ENCODE measurements at regions of chr11 and their contacts with region 1.

Region 1: DNA sequence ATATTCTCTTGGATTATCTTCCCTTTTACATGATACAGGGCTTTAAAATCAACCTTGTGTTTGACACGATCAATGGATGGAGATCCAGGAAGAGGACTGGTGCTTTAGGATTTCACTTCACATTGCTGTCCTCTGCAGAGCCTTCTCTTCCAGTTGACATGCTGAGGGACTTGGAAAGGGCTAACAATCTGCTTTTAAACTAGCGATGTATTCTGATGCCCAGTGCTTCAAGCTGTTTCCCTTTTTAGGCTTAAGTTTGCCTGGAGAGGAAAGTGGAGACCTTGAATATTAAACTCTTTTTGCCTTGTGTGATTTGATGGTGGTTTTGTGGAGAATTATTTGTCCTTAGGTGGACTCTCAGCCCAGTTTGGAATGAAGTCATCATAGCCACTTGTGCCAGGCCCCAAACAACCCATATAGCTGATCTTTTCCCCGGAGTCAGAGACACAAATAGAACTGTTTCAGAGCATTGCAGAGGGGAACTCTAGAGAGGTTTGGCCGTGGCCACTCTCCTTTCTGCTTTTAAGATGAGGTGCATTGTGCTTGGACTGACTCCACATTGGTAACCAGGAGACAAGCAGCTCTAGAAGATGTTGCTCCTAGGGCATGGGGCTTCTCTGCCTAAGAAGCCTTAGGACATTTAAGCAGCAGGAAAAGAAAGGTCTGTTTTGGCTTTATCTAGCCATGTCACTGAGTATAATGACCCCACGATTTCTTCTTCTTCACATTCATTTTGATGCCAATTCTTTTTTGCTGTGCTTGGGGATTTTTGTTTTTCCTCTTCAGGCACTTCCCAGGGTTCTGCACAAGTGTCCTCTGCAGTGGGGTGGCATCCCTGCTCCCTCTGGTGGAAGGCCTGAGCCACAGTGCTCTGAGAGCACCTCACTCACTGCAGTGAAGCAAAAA is 152.8 kb downstream of the NCAM1 start:
- DNase-seq: peak; percentile 49
- H3K4me3 ChIP-seq: no peak overlapping the region
- H3K27ac ChIP-seq: peak overlapping the region in 1 of 2 experiments; percentile 22; a peak in 2 of 4 replicates
- H3K4me1 ChIP-seq: peaks cover 6 to 20% of the 10 kb centered on the region in 2 experiments; a peak in 2 of 4 replicates
- H3K27me3 ChIP-seq: no peaks in the 10 kb centered on the region
- CTCF ChIP-seq: peak; percentile 81
- EP300 ChIP-seq: no peak
- RAD21 ChIP-seq: peak; percentile 92

Region 2: DNA sequence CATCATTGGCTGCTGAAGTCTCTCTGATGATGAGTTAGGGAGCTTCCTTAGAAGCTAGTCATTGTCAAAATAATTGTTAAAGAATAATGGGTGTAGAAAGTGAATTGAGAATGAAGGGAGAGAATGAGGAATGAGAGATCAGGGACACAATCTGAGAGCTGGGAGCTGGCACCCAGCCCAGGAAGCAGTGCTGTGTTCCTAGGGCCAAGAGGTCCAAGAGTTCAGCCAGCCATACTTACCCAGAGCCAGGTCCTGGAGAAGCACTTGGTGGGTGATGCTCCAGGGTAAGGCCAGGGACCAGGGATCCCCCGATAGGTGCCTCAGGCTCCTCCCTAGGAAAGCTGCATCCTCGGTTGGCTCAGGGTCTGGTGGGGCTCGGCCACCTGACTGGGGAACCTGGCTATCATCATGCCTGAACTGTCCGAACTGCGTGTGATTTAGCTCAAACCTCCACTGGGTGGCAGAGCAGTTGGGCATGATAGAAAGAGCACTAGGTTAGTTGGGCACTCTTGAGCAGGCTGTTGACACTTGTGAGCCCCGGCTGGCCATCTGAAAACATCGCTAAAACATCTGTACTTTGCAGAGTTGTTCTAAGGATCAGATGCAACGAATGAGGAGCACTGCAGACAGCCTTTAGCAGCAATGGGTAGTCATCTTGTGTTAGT is 276.8 kb before region 1 on chr11:
- CTCF ChIA-PET with region 1: interaction called, 14 read pairs
- POLR2A ChIA-PET with region 1: no interaction called
- DNase-seq: peak; percentile 33
- H3K4me3 ChIP-seq: no peak overlapping the region
- H3K27ac ChIP-seq: peak overlapping the region in 1 of 2 experiments; percentile 97; a peak in 2 of 4 replicates
- H3K4me1 ChIP-seq: peaks cover 18 to 52% of the 10 kb centered on the region in 2 experiments
- H3K27me3 ChIP-seq: no peaks in the 10 kb centered on the region
- CTCF ChIP-seq: peak; percentile 23; the same call in 1 of the 2 replicates
- EP300 ChIP-seq: no peak
- RAD21 ChIP-seq: peak; percentile 57

Region 3: DNA sequence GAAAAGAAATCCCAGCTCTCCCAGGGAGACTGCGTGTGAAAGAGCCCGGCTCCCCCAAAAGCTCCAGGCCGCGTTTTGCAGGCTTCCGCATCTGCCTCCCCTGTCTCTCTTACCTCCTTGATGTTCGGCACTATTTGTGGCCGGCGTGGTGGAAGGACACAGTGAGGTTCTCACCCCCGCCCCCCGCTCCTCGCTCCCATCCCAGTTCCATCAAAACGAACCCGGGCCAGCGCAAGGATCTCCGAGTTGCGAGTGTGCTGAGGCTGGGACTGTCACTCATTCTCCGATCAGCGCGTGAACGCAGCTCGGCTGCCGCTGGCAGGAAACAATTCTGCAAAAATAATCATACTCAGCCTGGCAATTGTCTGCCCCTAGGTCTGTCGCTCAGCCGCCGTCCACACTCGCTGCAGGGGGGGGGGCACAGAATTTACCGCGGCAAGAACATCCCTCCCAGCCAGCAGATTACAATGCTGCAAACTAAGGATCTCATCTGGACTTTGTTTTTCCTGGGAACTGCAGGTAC is 152.8 kb before region 1 on chr11 and contains the start of gene NCAM1:
- CTCF ChIA-PET with region 1: interaction called, 21 read pairs
- POLR2A ChIA-PET with region 1: no interaction called
- DNase-seq: peak; percentile 89
- H3K4me3 ChIP-seq: peak within 1 kb of the TSS; percentile 83 to 95
- H3K27ac ChIP-seq: peak within 1 kb of the TSS in 1 of 2 experiments; percentile 93; a peak in 3 of 4 replicates
- H3K4me1 ChIP-seq: peaks cover 0 to 13% of the 10 kb centered on the region in 2 experiments; a peak in 2 of 4 replicates
- H3K27me3 ChIP-seq: no peaks in the 10 kb centered on the region; the same call in 1 of the 2 replicates
- CTCF ChIP-seq: no peak
- EP300 ChIP-seq: peak; percentile 53 to 78; a peak in 3 of 4 replicates
- RAD21 ChIP-seq: peak; percentile 55
- polyA plus RNA-seq, gene NCAM1: 19.4 and 20.7 TPM in 2 replicates

Region 4: DNA sequence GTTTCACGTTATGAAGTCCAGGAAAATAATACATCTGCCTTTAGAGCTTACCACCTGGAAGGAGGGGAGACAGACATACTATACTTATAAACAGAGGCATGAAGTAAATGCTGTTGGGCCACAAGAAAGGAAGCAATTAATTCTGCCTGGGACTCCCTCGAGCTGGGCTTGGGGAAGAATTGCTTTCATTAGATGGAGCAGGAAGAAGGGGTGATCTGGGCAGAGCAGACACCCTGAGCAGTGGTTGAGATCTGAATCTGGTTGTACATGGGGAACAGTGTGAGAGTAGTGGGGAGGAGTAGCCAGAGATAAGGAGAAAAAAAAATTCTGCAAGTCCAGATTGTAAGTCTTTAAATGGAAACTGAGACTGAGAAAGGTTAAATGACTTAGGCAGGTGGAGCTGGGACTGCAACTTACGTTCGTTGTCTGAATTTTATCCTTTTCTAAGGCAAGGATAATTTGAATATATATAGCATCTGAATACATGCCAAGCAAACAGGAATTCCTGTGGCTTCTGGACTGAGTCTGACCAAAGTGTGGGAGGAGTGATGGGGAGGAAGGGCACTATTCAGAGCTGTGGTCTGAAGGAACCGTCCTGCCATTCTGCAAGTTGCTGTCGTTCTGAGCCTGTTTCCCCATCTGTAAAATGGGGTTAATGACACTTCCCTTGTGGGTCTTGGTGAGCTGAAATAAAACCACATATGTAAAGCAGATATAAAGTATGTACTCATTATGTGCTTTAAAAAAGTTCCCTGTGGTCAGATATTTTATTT is 144.9 kb before region 1 on chr11:
- CTCF ChIA-PET with region 1: interaction called, 13 read pairs
- POLR2A ChIA-PET with region 1: no interaction called
- DNase-seq: peak; percentile 25
- H3K4me3 ChIP-seq: no peak overlapping the region
- H3K27ac ChIP-seq: peak overlapping the region in 1 of 2 experiments; percentile 83; a peak in 2 of 4 replicates
- H3K4me1 ChIP-seq: peaks cover 0 to 24% of the 10 kb centered on the region in 2 experiments; a peak in 2 of 4 replicates
- H3K27me3 ChIP-seq: no peaks in the 10 kb centered on the region
- CTCF ChIP-seq: no peak
- EP300 ChIP-seq: no peak
- RAD21 ChIP-seq: no peak

Region 5: DNA sequence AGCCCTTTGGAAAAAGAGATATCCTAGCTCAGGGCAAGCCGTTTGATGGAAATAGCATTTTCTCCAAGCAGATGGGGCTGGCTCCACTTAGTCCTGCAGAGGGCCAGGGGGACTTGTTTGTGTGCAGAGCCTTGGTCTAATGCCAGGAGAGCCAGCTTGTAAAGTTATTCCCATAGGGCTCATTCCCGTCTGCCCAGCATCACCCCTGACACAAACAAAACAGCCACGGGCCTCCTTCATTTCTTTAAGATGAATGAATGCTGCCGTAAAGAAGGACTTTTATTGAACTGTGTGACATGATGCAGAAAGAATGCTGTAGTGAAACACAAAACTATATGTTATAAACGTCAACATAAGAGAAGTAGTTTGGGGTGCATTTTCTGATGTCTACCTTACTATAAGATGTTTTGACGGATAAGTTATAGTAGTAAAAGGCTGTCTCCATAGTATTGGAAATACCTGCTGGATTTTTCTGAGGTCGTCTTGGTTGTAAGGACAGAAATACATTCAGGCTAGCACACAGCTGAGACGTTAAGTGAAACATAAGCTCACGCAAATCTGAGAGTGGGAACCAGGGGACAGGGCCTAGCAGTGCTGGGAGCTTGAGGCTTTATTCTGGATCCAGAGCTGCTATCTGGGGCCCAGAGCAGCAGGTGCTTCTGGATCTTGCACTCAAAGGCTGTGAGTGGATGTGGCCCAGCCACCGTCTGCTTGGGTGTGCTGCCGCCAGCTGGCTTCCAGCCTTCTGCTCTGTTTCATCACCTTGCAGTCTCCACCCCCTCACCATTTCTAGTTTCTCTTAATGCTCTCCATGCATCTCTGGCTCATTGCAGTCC is 99.6 kb before region 1 on chr11:
- CTCF ChIA-PET with region 1: interaction called, 20 read pairs
- POLR2A ChIA-PET with region 1: no interaction called
- DNase-seq: peak; percentile 69
- H3K4me3 ChIP-seq: no peak overlapping the region
- H3K27ac ChIP-seq: peak overlapping the region in 1 of 2 experiments; percentile 93; a peak in 2 of 4 replicates
- H3K4me1 ChIP-seq: peaks cover 10 to 23% of the 10 kb centered on the region in 2 experiments; a peak in 3 of 4 replicates
- H3K27me3 ChIP-seq: no peaks in the 10 kb centered on the region
- CTCF ChIP-seq: no peak
- EP300 ChIP-seq: peak in 1 of 2 experiments; percentile 37; a peak in 1 of 4 replicates
- RAD21 ChIP-seq: peak; percentile 49

Region 6: GRCh38 chr11:113137713-113138529 is 23.9 kb after region 1 on chr11:
- CTCF ChIA-PET with region 1: interaction called, 10 read pairs
- POLR2A ChIA-PET with region 1: no interaction called
- DNase-seq: peak; percentile 56
- H3K4me3 ChIP-seq: no peak overlapping the region
- H3K27ac ChIP-seq: peak overlapping the region in 1 of 2 experiments; percentile 95; a peak in 2 of 4 replicates
- H3K4me1 ChIP-seq: peaks cover 0 to 51% of the 10 kb centered on the region in 2 experiments; a peak in 2 of 4 replicates
- H3K27me3 ChIP-seq: no peaks in the 10 kb centered on the region
- CTCF ChIP-seq: no peak
- EP300 ChIP-seq: peak in 1 of 2 experiments; percentile 87; a peak in 2 of 4 replicates
- RAD21 ChIP-seq: peak; percentile 38

Region 7: DNA sequence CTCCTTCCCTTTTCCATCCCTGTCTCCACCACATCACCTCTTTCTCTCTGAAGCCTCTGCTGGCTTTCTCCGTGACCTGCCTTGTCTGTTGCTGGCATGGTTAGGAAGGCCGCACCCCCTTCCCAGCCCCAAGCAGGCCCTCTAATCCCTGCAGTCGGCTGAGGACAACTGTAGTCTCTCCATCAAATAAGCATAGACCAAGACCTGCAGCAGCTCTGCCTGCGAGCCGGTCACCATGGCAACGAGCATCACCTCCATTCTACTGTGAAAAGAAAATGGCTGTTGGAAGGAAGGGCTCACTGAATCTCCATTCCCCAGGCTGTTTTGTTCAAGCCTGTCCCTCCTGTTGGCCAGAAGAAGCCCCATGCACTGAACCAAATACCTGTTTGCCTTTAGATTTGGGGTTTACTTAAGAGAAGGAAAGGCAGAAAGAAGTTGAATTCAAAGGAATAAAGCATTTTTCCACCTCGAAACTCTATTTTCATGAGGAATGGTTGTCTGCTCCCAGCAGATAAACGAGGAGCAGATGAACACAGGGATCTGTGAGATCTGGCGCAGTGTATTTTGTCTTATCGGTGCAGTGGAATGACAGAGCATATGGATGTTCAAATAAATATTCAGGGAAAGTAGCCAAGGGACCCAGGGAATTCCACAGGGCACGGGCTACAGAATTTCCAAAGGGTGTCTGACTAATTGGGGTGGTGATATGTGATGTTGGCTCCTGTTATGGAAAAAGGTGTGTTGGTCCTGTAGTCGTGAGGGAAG is 87.2 kb after region 1 on chr11:
- CTCF ChIA-PET with region 1: interaction called, 10 read pairs
- POLR2A ChIA-PET with region 1: no interaction called
- DNase-seq: peak; percentile 72
- H3K4me3 ChIP-seq: no peak overlapping the region
- H3K27ac ChIP-seq: peak overlapping the region in 1 of 2 experiments; percentile 93; a peak in 2 of 4 replicates
- H3K4me1 ChIP-seq: peaks cover 0 to 49% of the 10 kb centered on the region in 2 experiments; a peak in 2 of 4 replicates
- H3K27me3 ChIP-seq: no peaks in the 10 kb centered on the region
- CTCF ChIP-seq: no peak
- EP300 ChIP-seq: peak in 1 of 2 experiments; percentile 56; a peak in 1 of 4 replicates
- RAD21 ChIP-seq: no peak; the same call in 1 of the 2 replicates